ENCODE measurements at regions of chr11 and their contacts with region 1.

Region 1: GRCh38 chr11:19903620-19904069 is 191.0 kb downstream of the NAV2 start:
- DNase-seq: peak; percentile 60
- ATAC-seq: peak; percentile 64
- H3K4me3 ChIP-seq: no peak overlapping the region
- H3K27ac ChIP-seq: no peak overlapping the region
- H3K4me1 ChIP-seq: peaks cover 34% of the 10 kb centered on the region
- H3K27me3 ChIP-seq: peaks cover 0 to 10% of the 10 kb centered on the region in 2 experiments; a peak in 2 of 5 replicates
- CTCF ChIP-seq: peak; percentile 83
- EP300 ChIP-seq: no peak
- POLR2A ChIP-seq: no peak
- RAD21 ChIP-seq: no peak; the same call in 1 of the 2 replicates

Region 2: GRCh38 chr11:19071255-19071654 is 832.4 kb before region 1 on chr11:
- CTCF ChIA-PET with region 1: no interaction called
- POLR2A ChIA-PET with region 1: no interaction called
- in situ Hi-C with region 1: loop called (anchors 10 kb)
- intact Hi-C with region 1: loop called (anchors 2 kb)
- DNase-seq: peak; percentile 78
- ATAC-seq: peak; percentile 93
- H3K4me3 ChIP-seq: peak overlapping the region in 1 of 3 experiments; percentile 16; a peak in 1 of 6 replicates
- H3K27ac ChIP-seq: no peak overlapping the region
- H3K4me1 ChIP-seq: no peaks in the 10 kb centered on the region
- H3K27me3 ChIP-seq: peaks cover 2 to 19% of the 10 kb centered on the region in 2 experiments; a peak in 3 of 5 replicates
- CTCF ChIP-seq: peak; percentile 97
- EP300 ChIP-seq: no peak
- POLR2A ChIP-seq: no peak
- RAD21 ChIP-seq: peak; percentile 80

Region 3: DNA sequence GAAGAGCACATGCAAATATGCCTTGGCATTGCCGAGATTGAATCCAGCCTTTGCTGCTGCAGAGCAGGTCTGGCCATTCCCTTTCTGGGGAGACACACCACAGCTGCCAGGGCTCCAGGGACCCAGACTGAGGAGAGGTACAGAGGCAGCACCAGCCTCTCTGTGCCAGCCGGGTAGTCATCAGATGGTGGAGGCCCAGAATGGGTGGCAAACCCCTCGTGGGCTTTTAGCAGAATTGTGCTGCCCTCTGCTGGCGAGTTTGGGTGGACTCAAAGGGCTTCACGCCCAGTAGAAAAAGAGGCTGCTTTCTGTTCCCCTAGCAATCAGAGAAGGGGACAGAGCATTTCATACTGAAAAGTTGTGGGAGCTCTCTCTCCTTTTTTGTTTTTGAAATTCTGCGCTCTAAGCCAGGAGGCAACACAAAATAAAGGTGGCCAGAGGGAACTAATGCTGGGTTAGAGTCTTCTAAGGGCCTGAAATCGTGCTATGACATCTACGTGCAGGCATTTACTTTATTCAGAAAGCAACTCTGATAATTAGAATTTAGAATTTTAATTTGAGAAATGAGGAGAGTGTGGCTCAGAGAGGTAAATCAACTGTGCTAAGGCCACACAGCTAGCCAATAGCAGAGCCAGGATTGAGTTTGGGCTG is 349.8 kb before region 1 on chr11:
- CTCF ChIA-PET with region 1: interaction called, 10 read pairs
- POLR2A ChIA-PET with region 1: no interaction called
- in situ Hi-C with region 1: no loop called
- intact Hi-C with region 1: loop called (anchors 1 kb)
- DNase-seq: peak; percentile 49
- ATAC-seq: peak; percentile 83
- H3K4me3 ChIP-seq: no peak overlapping the region
- H3K27ac ChIP-seq: no peak overlapping the region
- H3K4me1 ChIP-seq: no peaks in the 10 kb centered on the region
- H3K27me3 ChIP-seq: peaks cover 1 to 10% of the 10 kb centered on the region in 2 experiments; a peak in 4 of 5 replicates
- CTCF ChIP-seq: peak; percentile 89
- EP300 ChIP-seq: no peak
- POLR2A ChIP-seq: no peak
- RAD21 ChIP-seq: peak; percentile 86

Region 4: GRCh38 chr11:19742588-19743292 is 160.9 kb before region 1 on chr11:
- CTCF ChIA-PET with region 1: no interaction called
- POLR2A ChIA-PET with region 1: no interaction called
- in situ Hi-C with region 1: loop called (anchors 5 kb)
- intact Hi-C with region 1: loop called (anchors 2 kb)
- DNase-seq: peak; percentile 52
- ATAC-seq: peak; percentile 95
- H3K4me3 ChIP-seq: no peak overlapping the region
- H3K27ac ChIP-seq: no peak overlapping the region
- H3K4me1 ChIP-seq: no peaks in the 10 kb centered on the region
- H3K27me3 ChIP-seq: peaks cover 0 to 20% of the 10 kb centered on the region in 2 experiments; a peak in 3 of 5 replicates
- CTCF ChIP-seq: peak; percentile 89
- EP300 ChIP-seq: no peak
- POLR2A ChIP-seq: no peak
- RAD21 ChIP-seq: peak; percentile 74

Region 5: DNA sequence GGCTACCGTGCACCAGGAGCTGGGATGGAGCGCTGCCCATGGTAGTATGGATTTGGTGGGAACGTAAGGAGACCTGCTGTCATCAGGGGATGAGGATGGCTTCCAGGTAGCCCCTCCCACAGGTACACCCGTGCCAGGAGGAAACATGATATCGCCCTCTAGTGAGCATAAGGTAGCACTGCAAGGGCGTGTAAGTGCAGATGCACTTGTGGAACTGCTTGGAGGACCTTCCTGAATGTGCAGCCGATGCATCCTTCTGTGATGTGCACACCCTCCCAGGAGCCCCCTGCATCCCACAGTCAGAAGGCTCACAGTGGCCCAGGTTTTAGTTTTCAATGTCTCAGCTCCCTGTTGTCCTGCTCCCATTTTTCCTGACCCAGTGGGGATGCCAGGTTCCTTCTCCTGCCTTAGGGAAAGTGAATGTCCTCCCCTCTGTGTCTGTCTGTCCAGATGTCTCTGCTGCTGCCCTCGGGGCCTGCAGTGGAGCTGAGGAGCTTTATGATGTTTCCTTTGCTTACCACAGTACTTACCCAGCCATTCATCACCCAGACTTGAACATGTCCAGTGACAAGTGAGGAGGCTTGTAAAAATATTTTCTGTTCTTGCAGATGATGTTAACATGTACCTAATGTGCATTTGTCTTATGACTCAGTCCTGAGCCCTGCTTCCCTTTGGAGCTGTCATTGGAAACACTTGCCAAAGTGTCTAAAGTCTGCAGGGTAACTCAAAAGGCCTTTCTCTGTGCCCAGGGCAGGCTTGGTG is 207.4 kb after region 1 on chr11:
- CTCF ChIA-PET with region 1: interaction called, 3 read pairs
- POLR2A ChIA-PET with region 1: no interaction called
- in situ Hi-C with region 1: no loop called
- intact Hi-C with region 1: loop called (anchors 1 kb)
- DNase-seq: peak; percentile 70
- ATAC-seq: peak; percentile 85
- H3K4me3 ChIP-seq: no peak overlapping the region
- H3K27ac ChIP-seq: no peak overlapping the region
- H3K4me1 ChIP-seq: no peaks in the 10 kb centered on the region
- H3K27me3 ChIP-seq: no peaks in the 10 kb centered on the region
- CTCF ChIP-seq: peak; percentile 95
- EP300 ChIP-seq: no peak
- POLR2A ChIP-seq: no peak; a peak in 1 of 4 replicates
- RAD21 ChIP-seq: peak; percentile 45; the same call in 1 of the 2 replicates

Region 6: DNA sequence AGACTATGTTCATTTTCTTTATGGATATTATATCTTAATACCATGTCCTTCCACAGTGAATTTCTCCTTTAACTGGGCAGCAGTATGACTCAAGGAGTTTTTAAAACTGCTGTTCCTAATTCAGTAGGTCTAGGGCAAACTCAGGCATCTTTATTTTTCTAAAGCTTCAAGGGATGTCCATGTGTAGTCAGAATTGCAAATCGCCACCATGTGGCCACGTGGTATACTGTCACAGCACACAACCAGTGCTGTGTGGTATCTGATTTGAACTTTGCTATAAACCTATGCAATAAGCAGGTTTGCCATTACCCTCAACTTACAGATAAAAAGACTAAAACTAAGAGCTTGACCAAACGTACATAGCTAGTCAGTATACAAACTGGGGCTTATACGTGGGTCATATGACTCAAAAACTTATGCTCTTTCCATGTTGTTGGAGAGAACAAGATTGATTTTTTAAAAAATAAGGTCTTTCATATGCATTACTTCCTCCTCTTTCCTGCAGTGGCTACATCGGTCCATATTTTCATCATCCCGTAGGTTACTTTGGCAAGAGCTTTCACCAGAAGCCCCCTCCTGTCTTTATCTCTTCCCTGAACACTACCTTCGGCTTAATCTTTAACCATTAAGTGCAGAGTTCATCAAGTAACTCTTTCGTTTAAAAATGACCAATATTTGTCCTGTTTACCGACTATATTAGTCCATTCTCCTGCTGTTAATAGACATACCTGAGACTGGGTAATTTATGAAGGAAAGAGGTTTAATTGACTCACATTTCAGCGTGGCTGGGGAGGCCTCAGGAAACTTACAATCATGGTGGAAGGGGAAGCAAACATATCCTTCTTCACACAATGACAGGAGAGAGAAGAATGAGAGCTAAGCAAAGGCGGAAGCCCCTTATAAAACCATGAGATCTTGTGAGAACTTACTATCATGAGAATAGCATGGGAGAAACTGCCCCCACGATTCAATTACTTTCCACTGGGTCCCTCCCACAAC is 451.9 kb after region 1 on chr11:
- CTCF ChIA-PET with region 1: no interaction called
- POLR2A ChIA-PET with region 1: no interaction called
- in situ Hi-C with region 1: no loop called
- intact Hi-C with region 1: loop called (anchors 10 kb)
- DNase-seq: peak; percentile 78
- ATAC-seq: peak; percentile 93
- H3K4me3 ChIP-seq: peak overlapping the region in 2 of 3 experiments; percentile 34 to 46; a peak in 2 of 6 replicates
- H3K27ac ChIP-seq: peak overlapping the region; percentile 25
- H3K4me1 ChIP-seq: peaks cover 49% of the 10 kb centered on the region
- H3K27me3 ChIP-seq: no peaks in the 10 kb centered on the region
- CTCF ChIP-seq: peak; percentile 63
- EP300 ChIP-seq: no peak
- POLR2A ChIP-seq: no peak
- RAD21 ChIP-seq: no peak